Panc1 (cell line): ENCODE measurements at regions of chr4 and their contacts with region 1.

Region 1: DNA sequence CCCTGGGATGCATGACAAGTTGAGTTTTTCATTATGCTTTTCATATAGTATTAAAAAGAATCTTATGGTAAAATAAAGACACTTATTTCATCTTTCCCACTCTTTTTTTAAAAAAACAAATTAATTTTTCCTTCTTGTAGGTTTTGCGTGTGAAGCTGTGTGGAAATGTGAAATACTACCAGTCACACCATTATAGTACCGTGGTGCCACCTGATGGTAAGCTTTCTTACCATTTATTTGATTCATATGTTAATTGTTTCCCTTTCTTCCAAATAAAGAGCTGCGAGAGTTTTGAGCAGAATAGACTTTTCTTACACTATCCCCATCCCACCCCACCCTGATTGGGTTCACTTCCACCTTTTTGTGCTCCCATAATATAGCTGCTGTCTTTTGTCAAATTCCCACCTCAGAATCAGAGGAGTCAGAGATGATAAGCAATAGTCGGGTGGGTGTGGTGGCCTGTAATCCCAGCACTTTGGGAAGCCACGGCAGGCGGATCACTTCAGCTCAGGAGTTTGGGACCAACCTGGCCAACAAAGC is 44.3 kb downstream of the CASP6 start:
- DNase-seq: no peak
- ATAC-seq: no peak
- H3K4me3 ChIP-seq: no peak overlapping the region
- H3K27ac ChIP-seq: no peak overlapping the region
- H3K4me1 ChIP-seq: no peaks in the 10 kb centered on the region
- H3K27me3 ChIP-seq: no peaks in the 10 kb centered on the region
- CTCF ChIP-seq: peak; percentile 26; the same call in 1 of the 2 replicates

Region 2: GRCh38 chr4:109548655-109549054 is 110.3 kb before region 1 on chr4:
- CTCF ChIA-PET with region 1: no interaction called
- POLR2A ChIA-PET with region 1: interaction called, 16 read pairs
- in situ Hi-C with region 1: no loop called
- intact Hi-C with region 1: no loop called
- DNase-seq: no peak
- ATAC-seq: no peak
- H3K4me3 ChIP-seq: no peak overlapping the region
- H3K27ac ChIP-seq: no peak overlapping the region
- H3K4me1 ChIP-seq: no peaks in the 10 kb centered on the region
- H3K27me3 ChIP-seq: no peaks in the 10 kb centered on the region
- CTCF ChIP-seq: no peak

Region 3: DNA sequence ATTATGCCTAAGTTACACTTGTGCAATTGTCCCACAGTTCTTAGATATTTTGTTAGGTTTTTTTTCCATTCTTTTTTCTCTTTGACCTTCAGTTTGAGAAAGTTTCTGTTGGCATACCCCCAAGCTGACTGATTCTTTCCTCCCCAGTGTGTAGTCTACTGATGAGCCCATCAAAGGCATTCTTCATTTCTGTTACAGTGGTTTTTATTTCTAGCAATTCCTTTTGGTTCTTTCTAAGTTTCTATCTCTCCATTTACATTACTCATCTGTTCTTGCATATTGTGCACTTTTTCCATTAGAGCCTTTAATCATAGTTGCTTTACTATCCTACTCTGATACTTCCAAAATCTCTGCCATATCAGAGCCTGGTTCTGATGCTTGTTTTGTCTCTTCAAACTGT is 12.4 kb after region 1 on chr4:
- CTCF ChIA-PET with region 1: no interaction called
- POLR2A ChIA-PET with region 1: interaction called, 19 read pairs
- in situ Hi-C with region 1: no loop called
- intact Hi-C with region 1: no loop called
- DNase-seq: no peak
- ATAC-seq: no peak
- H3K4me3 ChIP-seq: no peak overlapping the region
- H3K27ac ChIP-seq: no peak overlapping the region
- H3K4me1 ChIP-seq: no peaks in the 10 kb centered on the region
- H3K27me3 ChIP-seq: no peaks in the 10 kb centered on the region
- CTCF ChIP-seq: no peak

Region 4: GRCh38 chr4:109683621-109684253 is 24.8 kb after region 1 on chr4:
- CTCF ChIA-PET with region 1: no interaction called
- POLR2A ChIA-PET with region 1: no interaction called
- in situ Hi-C with region 1: no loop called
- intact Hi-C with region 1: no loop called
- DNase-seq: no peak
- ATAC-seq: no peak
- H3K4me3 ChIP-seq: no peak overlapping the region
- H3K27ac ChIP-seq: no peak overlapping the region
- H3K4me1 ChIP-seq: no peaks in the 10 kb centered on the region
- H3K27me3 ChIP-seq: no peaks in the 10 kb centered on the region
- CTCF ChIP-seq: no peak